ENCODE measurements at regions of chr18 and their contacts with region 1.

Region 1: GRCh38 chr18:63320046-63320689 is 599 bp upstream of the BCL2 start:
- DNase-seq: peak; percentile 92
- ATAC-seq: peak; percentile 80
- H3K4me3 Mint-ChIP-seq: peak overlapping the region; percentile 100
- H3K27ac Mint-ChIP-seq: peak overlapping the region; percentile 81
- H3K4me1 Mint-ChIP-seq: peaks cover 23% of the 10 kb centered on the region
- H3K27me3 Mint-ChIP-seq: no peaks in the 10 kb centered on the region

Region 2: GRCh38 chr18:63131106-63131958 is 188.8 kb before region 1 on chr18:
- CTCF ChIA-PET with region 1: interaction called, 28 read pairs
- DNase-seq: peak; percentile 70
- ATAC-seq: peak; percentile 61
- H3K4me3 Mint-ChIP-seq: no peak overlapping the region
- H3K27ac Mint-ChIP-seq: peak overlapping the region; percentile 76
- H3K4me1 Mint-ChIP-seq: peaks cover 32% of the 10 kb centered on the region
- H3K27me3 Mint-ChIP-seq: no peaks in the 10 kb centered on the region

Region 3: DNA sequence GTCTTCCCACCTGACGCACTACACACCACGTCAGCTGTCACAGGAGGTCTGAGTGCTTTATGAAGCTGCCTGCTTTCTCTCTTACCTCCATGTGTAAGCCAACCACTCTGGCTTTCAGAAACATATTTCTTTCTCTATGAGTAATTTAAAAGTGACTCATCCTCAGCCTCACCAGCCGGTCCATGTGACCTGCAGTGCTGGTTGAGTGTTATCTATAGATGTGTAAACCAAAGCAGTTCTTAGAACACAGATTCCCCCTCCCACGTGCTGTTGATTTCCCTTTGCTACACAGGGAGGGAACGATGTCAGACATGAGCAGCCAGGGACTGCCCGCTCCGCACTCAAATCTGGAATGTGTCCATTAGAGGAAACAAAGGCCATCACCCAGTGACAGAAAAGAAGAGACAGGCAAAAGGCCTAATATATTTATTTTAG is 158.4 kb before region 1 on chr18:
- CTCF ChIA-PET with region 1: interaction called, 50 read pairs
- DNase-seq: peak; percentile 93
- ATAC-seq: peak; percentile 88
- H3K4me3 Mint-ChIP-seq: peak overlapping the region; percentile 76
- H3K27ac Mint-ChIP-seq: peak overlapping the region; percentile 90
- H3K4me1 Mint-ChIP-seq: peaks cover 94% of the 10 kb centered on the region
- H3K27me3 Mint-ChIP-seq: no peaks in the 10 kb centered on the region

Region 4: DNA sequence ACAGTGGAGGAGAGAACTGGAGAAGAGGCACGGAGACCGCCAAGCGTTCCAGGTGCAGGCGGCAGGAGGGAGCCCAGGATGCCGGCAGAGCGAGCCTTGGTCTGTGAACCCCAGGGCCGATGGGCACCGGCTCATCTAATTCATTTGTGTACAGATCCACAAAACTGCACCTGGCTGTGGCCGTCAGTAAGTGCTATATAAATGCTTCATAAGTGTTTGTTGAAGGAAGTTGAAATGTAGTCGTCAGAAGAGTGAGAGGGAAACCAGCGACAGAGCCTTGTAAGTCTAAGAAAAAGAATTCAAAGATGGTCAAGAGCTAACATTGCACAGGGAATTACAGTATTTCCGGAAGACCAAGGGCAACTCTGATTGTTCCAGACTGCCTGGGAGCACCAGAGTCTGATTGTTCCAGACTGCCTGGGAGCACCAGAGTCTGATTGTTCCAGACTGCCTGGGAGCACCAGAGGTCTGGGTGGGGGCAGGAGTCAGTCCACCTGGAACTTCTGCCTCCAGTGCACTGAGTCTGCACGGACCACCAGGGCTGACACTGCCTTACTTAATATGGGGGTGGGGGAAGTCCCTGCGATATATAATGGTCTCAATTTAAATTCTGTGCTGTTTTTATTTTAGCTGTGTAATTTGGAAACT is 112.9 kb before region 1 on chr18:
- CTCF ChIA-PET with region 1: interaction called, 83 read pairs
- DNase-seq: no peak
- ATAC-seq: peak; percentile 6
- H3K4me3 Mint-ChIP-seq: peak overlapping the region; percentile 85
- H3K27ac Mint-ChIP-seq: peak overlapping the region; percentile 91
- H3K4me1 Mint-ChIP-seq: peaks cover 95% of the 10 kb centered on the region
- H3K27me3 Mint-ChIP-seq: no peaks in the 10 kb centered on the region

Region 5: DNA sequence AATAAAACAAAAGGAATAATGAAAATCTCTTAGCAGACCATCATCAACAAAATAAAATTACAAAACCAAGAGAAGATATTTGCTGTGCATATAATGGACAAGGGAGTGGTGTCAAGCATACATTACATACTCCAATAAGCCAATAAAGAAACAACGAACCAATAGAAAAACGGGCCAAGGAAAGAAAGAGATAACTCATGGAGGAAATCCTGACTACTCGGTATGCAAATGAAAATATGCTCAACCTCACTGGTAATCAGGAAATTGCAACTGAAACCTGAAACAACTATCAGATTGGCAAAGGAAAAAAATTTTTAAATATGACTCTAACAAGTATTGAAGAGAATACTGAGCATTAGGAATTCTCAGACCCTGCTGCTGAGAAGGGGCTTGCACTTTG is 85.3 kb before region 1 on chr18:
- CTCF ChIA-PET with region 1: interaction called, 13 read pairs
- DNase-seq: no peak
- ATAC-seq: peak; percentile 58
- H3K4me3 Mint-ChIP-seq: peak overlapping the region; percentile 51
- H3K27ac Mint-ChIP-seq: peak overlapping the region; percentile 89
- H3K4me1 Mint-ChIP-seq: peaks cover 76% of the 10 kb centered on the region
- H3K27me3 Mint-ChIP-seq: no peaks in the 10 kb centered on the region

Region 6: DNA sequence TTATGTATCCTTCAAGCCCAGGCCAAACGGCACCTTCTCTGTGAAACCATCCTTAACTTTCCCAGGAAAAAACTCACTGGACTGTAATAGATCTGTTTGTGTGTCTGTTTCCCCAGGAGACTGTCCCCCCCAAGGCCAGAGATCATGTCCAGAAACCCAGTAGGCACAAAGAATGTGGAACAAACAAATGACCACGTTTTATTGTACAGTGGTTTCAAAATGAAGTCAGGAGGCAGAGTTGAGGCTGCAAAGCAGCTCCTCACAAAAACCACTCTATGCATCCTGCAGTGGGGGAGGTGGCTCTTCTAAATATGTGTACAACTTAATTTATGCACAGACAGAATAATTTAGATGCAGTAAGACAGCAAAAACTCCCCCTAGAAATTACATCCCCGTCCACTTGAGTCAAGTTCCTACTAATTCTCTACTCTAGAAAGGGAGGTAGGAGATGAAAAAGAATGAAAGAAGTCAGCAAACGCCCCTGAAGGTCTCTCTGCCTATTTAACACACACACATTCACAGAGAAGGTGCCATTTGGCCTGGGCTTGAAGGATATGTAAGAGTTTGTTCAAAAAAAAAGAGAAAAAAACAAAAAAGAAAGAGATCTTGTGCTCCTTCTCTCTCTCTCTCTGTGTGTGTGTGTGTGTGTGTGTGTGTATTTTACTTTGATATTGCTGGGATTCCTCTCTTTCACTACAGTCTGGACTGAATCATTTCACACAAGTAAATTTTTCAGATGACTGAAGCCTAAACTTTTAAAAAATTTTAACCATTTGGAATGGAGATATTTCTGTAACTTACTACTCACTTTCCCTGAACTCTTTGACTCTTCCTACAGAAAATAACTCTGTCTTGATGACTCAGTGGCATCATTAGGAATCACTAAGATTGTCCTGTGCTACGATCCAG is 20.1 kb before region 1 on chr18:
- CTCF ChIA-PET with region 1: interaction called, 43 read pairs
- DNase-seq: peak; percentile 83
- ATAC-seq: peak; percentile 78
- H3K4me3 Mint-ChIP-seq: peak overlapping the region; percentile 64
- H3K27ac Mint-ChIP-seq: peak overlapping the region; percentile 92
- H3K4me1 Mint-ChIP-seq: peaks cover 91% of the 10 kb centered on the region
- H3K27me3 Mint-ChIP-seq: no peaks in the 10 kb centered on the region

Region 7: DNA sequence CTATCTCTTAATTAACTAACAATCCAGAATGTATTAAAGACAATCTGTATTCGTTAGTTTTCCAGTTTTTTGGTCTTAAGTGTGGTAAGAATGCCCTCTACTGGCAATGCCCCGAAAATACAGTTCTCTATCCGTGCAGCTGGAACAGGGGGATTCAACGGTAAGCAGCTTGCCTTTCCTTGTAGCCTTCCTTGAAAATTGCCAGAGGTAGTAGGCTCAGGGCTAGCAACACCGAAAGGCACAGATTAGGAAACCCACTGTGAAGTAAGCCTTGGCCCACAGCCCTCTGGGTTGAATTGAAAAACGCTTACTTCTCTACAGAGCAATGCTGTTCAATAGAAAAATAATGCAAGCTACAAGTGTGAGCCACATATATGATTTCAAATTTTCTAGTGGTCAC is 119.2 kb after region 1 on chr18:
- CTCF ChIA-PET with region 1: interaction called, 33 read pairs
- DNase-seq: peak; percentile 55
- ATAC-seq: peak; percentile 60
- H3K4me3 Mint-ChIP-seq: no peak overlapping the region
- H3K27ac Mint-ChIP-seq: no peak overlapping the region
- H3K4me1 Mint-ChIP-seq: peaks cover 4% of the 10 kb centered on the region
- H3K27me3 Mint-ChIP-seq: peaks cover 46% of the 10 kb centered on the region

Measured in activated CD8-positive, alpha-beta memory T cell treated with anti-CD3 and anti-CD28 coated beads, Interleukin-2, amount 10 ng/mL, durations not matched to agents 7 days and 5 days (primary cell).